Pancreas (tissue), 10 donors: ENCODE measurements at regions of chr2 and their contacts with region 1.

Region 1: GRCh38 chr2:72871880-72872279 is 15.3 kb upstream of the SPR start:
- DNase-seq: no peak
- ATAC-seq: no peak
- H3K4me3 ChIP-seq: no peak overlapping the region
- H3K27ac ChIP-seq: no peak overlapping the region
- H3K4me1 ChIP-seq: no peaks in the 10 kb centered on the region
- H3K27me3 ChIP-seq: no peaks in the 10 kb centered on the region
- CTCF ChIP-seq: no peak

Region 2: DNA sequence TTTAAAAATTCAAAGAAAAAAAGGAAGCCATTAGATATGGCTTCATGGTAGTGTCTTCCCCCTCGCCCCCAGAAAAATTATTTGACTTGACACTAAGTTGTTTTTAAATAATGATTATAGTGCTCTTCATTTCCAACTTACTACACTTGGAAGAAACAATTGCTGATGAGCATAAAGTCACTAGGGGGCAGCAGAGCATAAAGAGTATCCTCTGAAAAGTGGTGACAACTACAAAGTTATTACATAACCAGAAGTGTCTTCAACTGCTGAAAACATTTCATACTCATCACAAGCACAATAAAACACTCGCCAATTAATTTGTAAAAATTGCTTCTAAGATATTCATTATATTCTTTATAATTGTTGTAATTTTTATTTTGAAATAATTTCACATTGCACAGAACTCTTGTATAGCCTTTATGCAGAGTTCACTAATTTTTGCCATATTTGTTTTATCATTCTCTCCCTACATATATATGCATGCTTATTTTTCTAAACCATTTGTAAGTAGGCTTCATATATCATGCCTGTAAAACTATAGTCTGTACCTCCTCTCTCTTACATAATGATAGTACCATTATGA is 100.9 kb before region 1 on chr2:
- intact Hi-C with region 1: loop called in 1 of 3 experiments (anchors 10 kb)
- DNase-seq: peak in 3 of 6 donors; percentile 47 to 61 (median 48)
- ATAC-seq: peak in 3 of 4 donors; percentile 81 to 92 (median 84)
- H3K4me3 ChIP-seq: no peak overlapping the region
- H3K27ac ChIP-seq: no peak overlapping the region
- H3K4me1 ChIP-seq: no peaks in the 10 kb centered on the region
- H3K27me3 ChIP-seq: no peaks in the 10 kb centered on the region
- CTCF ChIP-seq: peak; percentile 52 to 72 (median 69)

Region 3: DNA sequence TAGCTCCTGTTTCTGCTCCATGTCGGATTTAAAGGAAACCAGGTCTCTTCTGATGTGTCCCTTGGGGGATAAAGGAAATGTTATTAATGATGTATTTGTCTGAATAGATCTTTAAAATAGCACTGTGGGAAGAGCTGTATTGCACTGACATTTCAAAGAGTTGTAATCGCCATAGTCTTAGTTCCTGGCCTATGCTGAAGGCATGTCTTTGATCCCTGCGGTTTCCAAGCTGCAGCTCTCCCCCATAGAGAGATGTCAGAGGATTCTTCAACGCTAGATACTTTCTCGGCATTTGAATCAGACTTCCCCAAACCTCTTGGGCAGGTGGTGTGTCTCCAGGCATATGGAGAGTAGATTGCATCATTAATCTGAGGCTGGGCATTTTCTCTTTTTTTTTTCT is 729.9 kb after region 1 on chr2:
- intact Hi-C with region 1: no loop called
- DNase-seq: no peak
- ATAC-seq: no peak
- H3K4me3 ChIP-seq: no peak overlapping the region
- H3K27ac ChIP-seq: no peak overlapping the region
- H3K4me1 ChIP-seq: no peaks in the 10 kb centered on the region
- H3K27me3 ChIP-seq: no peaks in the 10 kb centered on the region
- CTCF ChIP-seq: no peak